Body of pancreas (tissue), 4 donors: ENCODE measurements at regions of chr1 and their contacts with region 1.

Region 1: GRCh38 chr1:113898241-113898814 is 6.3 kb downstream of the AP4B1 start:
- DNase-seq: no peak
- ATAC-seq: no peak
- H3K4me3 ChIP-seq: no peak overlapping the region
- H3K27ac ChIP-seq: no peak overlapping the region
- H3K4me1 ChIP-seq: peaks cover 9% of the 10 kb centered on the region
- H3K27me3 ChIP-seq: no peaks in the 10 kb centered on the region
- CTCF ChIP-seq: no peak
- POLR2A ChIP-seq: no peak

Region 2: DNA sequence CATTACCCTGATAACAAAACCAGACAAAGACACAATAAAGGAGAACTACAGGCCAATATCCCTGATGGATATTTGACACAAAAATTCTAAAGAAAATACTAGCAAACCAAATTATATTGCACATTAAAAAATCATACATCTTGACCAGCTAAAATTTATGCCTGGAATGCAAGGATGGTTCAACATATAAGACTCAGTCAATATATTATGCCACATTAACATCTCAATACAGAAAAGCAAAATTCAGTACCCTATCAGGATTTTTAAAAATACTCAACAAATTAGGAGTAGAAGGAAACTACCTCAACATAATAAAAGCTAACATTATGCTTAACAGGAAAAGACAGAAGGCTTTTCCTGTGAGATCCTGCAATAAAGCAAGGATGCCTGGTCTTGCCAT is 330.9 kb before region 1 on chr1:
- intact Hi-C with region 1: no loop called
- DNase-seq: no peak
- ATAC-seq: no peak
- H3K4me3 ChIP-seq: no peak overlapping the region
- H3K27ac ChIP-seq: no peak overlapping the region
- H3K4me1 ChIP-seq: no peaks in the 10 kb centered on the region
- H3K27me3 ChIP-seq: no peaks in the 10 kb centered on the region
- CTCF ChIP-seq: no peak
- POLR2A ChIP-seq: no peak

Region 3: GRCh38 chr1:113835642-113836307 is 62.6 kb before region 1 on chr1:
- intact Hi-C with region 1: loop called (anchors 5 kb)
- DNase-seq: peak in 1 of 4 donors; percentile 21
- ATAC-seq: peak; percentile 35
- H3K4me3 ChIP-seq: no peak overlapping the region
- H3K27ac ChIP-seq: no peak overlapping the region
- H3K4me1 ChIP-seq: no peaks in the 10 kb centered on the region
- H3K27me3 ChIP-seq: no peaks in the 10 kb centered on the region
- CTCF ChIP-seq: peak in 6 of 7 experiments; percentile 47 to 67 (median 64)
- POLR2A ChIP-seq: no peak